Right cardiac atrium (tissue), 5 donors: ENCODE measurements at regions of chr12 and their contacts with region 1.

Region 1: DNA sequence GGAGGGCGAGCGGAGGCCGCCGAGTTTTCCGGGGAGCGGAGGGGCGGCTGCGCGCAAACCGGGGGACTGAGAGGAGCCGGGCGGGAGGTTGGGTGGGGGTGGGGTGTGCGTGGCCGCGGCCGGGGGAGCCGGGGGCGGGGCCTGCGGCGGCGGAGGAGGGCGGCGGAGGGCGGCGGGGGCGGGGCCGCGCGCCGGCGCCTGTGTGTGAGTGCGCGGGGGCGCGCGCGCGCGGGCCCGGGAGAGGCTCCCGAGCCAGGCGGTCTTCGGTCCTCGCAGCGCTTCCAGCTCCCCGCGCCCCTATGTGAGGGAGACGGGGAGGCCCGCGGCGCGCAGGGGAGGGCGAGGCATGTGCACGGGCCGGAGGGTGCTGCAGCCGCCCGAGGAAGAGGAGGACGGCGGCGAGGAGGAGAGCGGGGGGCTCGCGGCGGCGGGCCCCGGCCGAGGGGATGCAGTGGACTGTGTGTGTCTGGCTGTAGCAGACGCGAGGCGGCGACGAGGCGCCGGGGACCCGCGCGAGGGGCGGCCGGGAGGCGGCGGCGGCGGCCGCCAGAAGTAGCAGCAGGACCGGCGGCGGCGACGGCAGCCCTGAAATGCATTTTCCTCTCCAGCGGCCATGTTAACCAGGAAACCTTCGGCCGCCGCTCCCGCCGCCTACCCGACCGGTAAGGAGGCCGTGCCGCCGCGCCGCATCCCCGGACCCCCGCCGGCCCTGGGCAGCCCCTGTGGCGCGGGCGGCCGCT is at the start of gene DYRK2:
- DNase-seq: peak; percentile 86 to 96 (median 93)
- ATAC-seq: peak; percentile 80 to 82
- H3K4me3 ChIP-seq: peak within 1 kb of the TSS; percentile 94
- H3K27ac ChIP-seq: peak within 1 kb of the TSS; percentile 87
- H3K4me1 ChIP-seq: peaks cover 4% of the 10 kb centered on the region
- H3K27me3 ChIP-seq: no peaks in the 10 kb centered on the region
- total RNA-seq, gene DYRK2: 57.1 to 93.7 (median 75.7) TPM

Region 2: DNA sequence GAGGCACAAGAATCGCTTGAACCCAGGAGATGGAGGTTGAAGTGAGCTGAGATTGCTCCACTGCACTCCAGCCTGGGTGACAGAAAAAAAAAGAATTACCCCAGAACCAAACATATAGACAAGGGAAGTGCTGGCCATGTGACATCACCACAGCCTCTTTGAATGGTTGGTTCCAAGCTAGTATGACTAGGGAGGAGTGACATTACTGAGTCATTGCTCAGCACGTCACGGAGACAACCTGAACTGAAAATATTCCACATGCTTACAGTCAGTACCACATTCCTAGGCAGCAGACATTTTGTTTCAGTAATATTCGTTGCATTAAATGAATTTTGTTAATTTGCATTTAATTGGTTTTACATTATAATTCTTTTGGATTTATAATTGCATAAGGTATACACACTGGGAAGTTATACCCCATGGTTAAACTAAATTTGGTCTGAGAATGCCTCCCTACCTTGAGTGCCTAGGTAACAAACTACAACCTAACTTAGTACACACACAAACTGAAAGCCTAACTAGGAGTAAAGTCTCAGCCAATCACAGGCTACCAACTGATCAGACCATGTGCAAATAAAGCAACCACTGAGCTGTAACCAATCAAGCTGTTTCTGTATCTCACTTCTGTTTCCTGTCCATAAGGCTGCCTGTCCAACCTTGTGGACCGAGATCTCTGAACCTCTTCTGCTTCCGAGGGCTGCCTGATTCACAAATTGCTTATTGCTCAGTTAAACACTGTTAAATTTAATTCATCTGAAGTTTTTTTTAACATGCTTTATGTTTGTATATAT is 215.1 kb before region 1 on chr12:
- intact Hi-C with region 1: loop called in 1 of 4 experiments (anchors 5 kb)
- DNase-seq: no peak
- ATAC-seq: no peak
- H3K4me3 ChIP-seq: no peak overlapping the region
- H3K27ac ChIP-seq: no peak overlapping the region
- H3K4me1 ChIP-seq: no peaks in the 10 kb centered on the region
- H3K27me3 ChIP-seq: no peaks in the 10 kb centered on the region

Region 3: GRCh38 chr12:67441736-67442346 is 206.8 kb before region 1 on chr12:
- intact Hi-C with region 1: loop called in 3 of 4 experiments (anchors 5 to 10 kb)
- DNase-seq: peak; percentile 91 to 96 (median 93)
- ATAC-seq: peak; percentile 91 to 97
- H3K4me3 ChIP-seq: peak overlapping the region; percentile 27
- H3K27ac ChIP-seq: no peak overlapping the region
- H3K4me1 ChIP-seq: peaks cover 4% of the 10 kb centered on the region
- H3K27me3 ChIP-seq: no peaks in the 10 kb centered on the region

Region 4: GRCh38 chr12:67534681-67535080 is 114.0 kb before region 1 on chr12:
- intact Hi-C with region 1: loop called in 1 of 4 experiments (anchors 10 kb)
- DNase-seq: peak in 2 of 3 donors; percentile 51 to 62
- ATAC-seq: peak; percentile 79 to 84
- H3K4me3 ChIP-seq: no peak overlapping the region
- H3K27ac ChIP-seq: no peak overlapping the region
- H3K4me1 ChIP-seq: no peaks in the 10 kb centered on the region
- H3K27me3 ChIP-seq: no peaks in the 10 kb centered on the region

Region 5: DNA sequence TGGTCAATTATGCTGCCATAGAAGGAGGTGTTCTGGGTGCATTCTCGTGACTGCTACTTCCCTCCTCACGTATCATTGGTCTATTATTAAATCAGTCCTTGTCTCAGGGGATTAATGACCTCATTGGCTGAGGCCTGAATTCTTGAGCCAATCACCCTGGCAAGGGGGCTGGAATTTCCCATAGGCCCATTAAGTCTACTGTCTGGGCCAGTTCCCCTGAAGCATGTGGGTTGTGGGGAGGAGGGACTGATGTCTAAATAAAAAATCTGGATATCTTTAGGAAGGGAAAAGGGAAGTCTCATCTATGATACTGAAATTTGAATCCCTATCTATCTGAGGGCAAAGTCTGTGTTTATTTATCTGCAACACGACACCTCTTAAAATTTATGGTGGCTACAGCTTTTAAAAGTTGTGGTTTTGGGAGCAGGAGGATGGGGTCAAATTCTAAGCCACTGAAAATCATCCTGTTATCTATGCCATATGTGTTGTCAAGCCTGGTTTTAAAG is 71.7 kb after region 1 on chr12:
- intact Hi-C with region 1: loop called in 1 of 4 experiments (anchors 10 kb)
- DNase-seq: peak; percentile 37 to 67 (median 53)
- ATAC-seq: peak; percentile 81 to 87
- H3K4me3 ChIP-seq: no peak overlapping the region
- H3K27ac ChIP-seq: peak overlapping the region; percentile 81
- H3K4me1 ChIP-seq: peaks cover 2% of the 10 kb centered on the region
- H3K27me3 ChIP-seq: no peaks in the 10 kb centered on the region

Region 6: GRCh38 chr12:67943226-67943892 is 294.7 kb after region 1 on chr12:
- intact Hi-C with region 1: loop called in 2 of 4 experiments (anchors 2 to 5 kb)
- DNase-seq: peak in 1 of 3 donors; percentile 59
- ATAC-seq: peak; percentile 78 to 79
- H3K4me3 ChIP-seq: no peak overlapping the region
- H3K27ac ChIP-seq: no peak overlapping the region
- H3K4me1 ChIP-seq: no peaks in the 10 kb centered on the region
- H3K27me3 ChIP-seq: no peaks in the 10 kb centered on the region